Activated naive CD4-positive, alpha-beta T cell treated with anti-CD3 and anti-CD28 coated beads for 36 hours (primary cell): ENCODE measurements at regions of chr7 and their contacts with region 1.

Region 1: DNA sequence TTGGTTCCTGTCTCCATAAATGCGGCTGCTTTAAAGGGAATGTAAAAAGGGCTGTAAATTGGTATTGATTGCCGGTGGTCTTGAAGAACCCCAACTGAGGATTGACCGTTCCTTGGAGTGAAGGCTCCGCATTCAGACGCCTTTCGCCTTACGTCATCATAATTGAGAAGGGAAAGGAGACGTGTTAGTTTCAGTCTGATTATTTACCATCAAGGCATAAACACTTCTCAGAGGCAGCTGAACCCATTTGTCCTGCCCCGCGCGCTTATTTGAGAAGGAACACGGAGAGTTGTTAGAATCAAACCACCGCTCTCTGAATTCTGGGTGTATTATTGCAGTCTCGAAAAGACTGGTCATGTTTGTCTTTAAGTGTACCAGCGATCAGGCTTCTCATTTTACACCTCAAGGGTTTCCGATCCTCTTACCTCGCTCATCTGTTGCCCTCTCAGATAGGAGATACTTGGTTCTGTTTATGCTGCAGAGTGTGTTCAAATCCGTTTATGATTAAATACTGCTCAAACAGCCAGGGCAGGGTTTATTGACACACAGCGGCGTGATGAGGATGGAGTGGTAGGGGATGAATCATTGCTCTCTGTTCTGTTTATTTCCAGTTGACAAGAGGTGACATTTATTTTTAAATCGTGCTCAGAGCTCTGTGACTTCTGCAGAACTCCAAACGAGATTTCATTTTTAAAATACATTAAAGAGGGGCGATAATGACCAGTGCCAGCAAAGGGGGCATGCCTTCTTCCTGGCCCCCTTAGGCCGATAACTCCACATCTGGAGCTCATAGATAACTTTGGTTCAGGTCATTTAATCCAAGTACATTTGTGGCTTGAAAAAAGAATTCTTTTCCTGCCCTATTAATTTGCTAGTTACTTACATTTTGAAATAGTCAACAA is 30.4 kb downstream of the FOXK1 start:
- DNase-seq: peak; percentile 41
- H3K4me3 Mint-ChIP-seq: no peak overlapping the region
- H3K27ac Mint-ChIP-seq: no peak overlapping the region
- H3K4me1 Mint-ChIP-seq: peaks cover 47% of the 10 kb centered on the region
- H3K27me3 Mint-ChIP-seq: no peaks in the 10 kb centered on the region

Region 2: GRCh38 chr7:4744391-4745264 is 32.1 kb after region 1 on chr7:
- CTCF ChIA-PET with region 1: interaction called, 3 read pairs
- intact Hi-C with region 1: loop called (anchors 2 kb)
- DNase-seq: peak; percentile 77
- H3K4me3 Mint-ChIP-seq: peak overlapping the region; percentile 80
- H3K27ac Mint-ChIP-seq: peak overlapping the region; percentile 95
- H3K4me1 Mint-ChIP-seq: peaks cover 73% of the 10 kb centered on the region
- H3K27me3 Mint-ChIP-seq: no peaks in the 10 kb centered on the region